ENCODE measurements at regions of chr19 and their contacts with region 1.

Region 1: DNA sequence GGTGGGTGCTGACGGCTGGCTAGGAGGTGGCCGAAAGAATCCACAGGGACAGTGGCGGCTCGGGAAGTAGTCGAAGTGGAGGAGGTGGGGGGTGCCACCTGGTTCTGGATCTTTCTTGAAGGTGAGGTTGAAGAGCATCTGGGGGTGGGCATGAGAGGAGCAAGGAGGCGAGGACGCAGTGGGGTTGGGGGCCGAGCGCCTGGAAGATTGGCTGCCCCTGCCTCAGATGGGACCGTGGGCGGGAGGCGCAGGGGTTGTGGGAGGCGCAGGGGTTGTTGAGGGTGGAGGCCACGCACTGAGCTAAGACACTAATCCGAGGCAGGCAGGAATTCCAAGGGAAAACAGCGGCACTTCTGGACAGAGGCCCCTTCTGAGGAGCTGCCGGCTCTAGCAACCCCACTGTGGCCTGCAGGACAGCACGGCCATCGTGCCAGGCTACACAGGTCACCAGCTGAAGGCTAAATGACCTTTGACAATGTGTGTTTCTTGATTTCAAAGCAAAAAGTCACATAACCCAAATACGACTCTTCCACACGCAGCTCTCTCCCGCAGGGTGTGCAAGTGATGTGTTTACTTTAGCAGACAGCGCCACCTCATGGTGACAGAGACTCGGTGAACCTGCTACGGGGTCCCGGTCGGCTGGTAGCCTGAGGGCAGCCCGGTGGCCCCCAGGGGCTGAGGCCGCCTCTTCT is 44.1 kb upstream of the RANBP3 start:
- DNase-seq: no peak
- H3K4me3 ChIP-seq: no peak overlapping the region
- CTCF ChIP-seq: peak; percentile 78

Region 2: DNA sequence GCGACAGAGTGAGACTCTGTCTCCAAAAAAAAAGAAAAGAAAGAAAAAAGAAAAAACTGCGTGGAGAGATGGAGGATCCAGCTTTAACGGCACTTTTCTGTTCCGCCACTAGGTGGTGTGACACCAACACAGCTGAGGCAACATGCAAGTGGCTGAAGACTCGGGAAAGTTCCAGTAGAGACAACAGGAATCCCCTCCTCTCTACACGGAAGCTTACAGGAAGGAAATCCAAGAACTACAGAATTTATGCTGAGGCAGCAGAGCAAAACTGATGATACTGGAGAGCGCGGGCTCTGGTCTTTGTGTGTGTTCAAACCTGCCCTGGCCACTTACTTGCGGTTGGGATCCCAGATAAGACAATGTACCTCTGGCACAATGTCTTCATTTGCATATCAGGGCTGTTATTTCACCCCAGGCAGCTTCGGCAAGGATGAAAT is 54.0 kb before region 1 on chr19:
- CTCF ChIA-PET with region 1: interaction called, 34 read pairs
- POLR2A ChIA-PET with region 1: no interaction called
- DNase-seq: no peak
- H3K4me3 ChIP-seq: no peak overlapping the region
- CTCF ChIP-seq: peak; percentile 85

Region 3: GRCh38 chr19:5977785-5978605 is 44.0 kb before region 1 on chr19 and contains the start of gene RANBP3:
- CTCF ChIA-PET with region 1: interaction called, 122 read pairs
- POLR2A ChIA-PET with region 1: no interaction called
- DNase-seq: peak; percentile 91
- H3K4me3 ChIP-seq: peak within 1 kb of the TSS; percentile 93
- CTCF ChIP-seq: no peak

Region 4: DNA sequence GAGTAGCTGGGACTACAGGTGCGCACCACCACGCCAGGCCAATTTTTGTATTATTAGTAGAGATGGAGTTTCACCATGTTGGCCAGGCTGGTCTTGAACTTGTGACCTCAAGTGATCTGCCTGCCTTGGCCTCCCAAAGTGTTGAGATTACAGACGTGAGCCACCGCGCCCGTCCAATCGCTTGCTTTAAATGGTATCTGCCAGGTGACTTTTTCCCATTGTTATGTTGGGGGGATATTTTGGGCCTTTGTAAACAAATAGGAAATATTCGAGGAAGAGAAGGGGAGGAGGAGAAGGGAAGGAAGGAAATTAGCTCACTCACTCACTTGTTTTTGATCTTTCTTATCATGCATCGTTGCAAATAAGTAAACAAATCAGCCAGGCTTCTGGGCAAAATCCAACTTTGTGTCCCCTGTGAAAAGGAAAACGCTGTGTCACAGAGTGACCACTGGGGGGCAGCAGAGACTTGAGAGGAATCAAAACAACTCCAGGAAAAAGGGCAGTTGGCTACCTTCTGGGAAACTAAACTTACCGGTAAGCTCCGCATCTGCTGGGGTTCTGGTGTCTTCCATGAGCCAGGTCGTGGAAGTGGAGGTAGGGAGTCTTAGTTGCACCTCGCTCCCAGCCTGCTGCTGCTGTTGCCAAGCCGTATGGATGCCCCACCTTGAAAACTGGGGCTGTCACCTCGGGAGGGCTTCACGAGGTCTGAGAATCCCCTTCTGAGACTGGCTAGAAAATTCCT is 34.8 kb before region 1 on chr19:
- CTCF ChIA-PET with region 1: interaction called, 122 read pairs
- POLR2A ChIA-PET with region 1: no interaction called
- DNase-seq: peak; percentile 34
- H3K4me3 ChIP-seq: peak overlapping the region; percentile 42
- CTCF ChIP-seq: peak; percentile 72

Region 5: DNA sequence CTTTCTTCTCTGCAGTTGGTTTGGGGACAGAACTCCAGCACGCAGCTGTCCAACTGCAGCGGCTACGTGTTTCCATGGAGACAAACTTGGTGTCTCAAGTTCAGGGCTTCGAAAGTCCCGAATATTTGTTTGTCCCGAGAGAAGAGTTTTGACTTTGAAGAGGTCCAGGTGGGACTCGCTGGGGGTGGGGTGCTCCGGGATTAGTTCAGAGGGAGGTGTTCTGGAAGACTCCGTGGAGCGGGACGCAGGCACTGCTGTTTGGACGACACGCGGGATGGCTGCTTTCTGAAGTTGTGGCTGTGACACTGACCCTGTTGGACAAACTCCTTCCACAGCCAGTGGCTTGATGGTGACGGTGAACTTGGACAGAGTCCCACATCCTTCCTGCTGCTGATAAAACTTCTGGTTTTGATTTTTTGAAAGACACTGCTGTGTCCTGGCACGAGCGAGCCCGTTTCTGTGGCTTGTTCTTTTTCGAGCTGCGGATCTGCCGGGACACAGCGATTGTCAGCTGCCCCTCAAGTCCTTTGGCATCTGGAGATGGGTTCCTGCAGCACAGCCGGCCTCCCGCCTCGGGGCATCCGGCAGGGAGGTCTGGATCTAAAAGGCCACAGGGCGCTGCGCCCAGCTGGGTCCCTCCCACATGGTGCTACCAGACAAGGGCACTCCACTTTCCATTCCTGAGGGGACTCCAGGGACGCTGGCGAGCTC is 28.2 kb before region 1 on chr19:
- CTCF ChIA-PET with region 1: interaction called, 122 read pairs
- POLR2A ChIA-PET with region 1: no interaction called
- DNase-seq: no peak
- H3K4me3 ChIP-seq: no peak overlapping the region
- CTCF ChIP-seq: no peak

Region 6: DNA sequence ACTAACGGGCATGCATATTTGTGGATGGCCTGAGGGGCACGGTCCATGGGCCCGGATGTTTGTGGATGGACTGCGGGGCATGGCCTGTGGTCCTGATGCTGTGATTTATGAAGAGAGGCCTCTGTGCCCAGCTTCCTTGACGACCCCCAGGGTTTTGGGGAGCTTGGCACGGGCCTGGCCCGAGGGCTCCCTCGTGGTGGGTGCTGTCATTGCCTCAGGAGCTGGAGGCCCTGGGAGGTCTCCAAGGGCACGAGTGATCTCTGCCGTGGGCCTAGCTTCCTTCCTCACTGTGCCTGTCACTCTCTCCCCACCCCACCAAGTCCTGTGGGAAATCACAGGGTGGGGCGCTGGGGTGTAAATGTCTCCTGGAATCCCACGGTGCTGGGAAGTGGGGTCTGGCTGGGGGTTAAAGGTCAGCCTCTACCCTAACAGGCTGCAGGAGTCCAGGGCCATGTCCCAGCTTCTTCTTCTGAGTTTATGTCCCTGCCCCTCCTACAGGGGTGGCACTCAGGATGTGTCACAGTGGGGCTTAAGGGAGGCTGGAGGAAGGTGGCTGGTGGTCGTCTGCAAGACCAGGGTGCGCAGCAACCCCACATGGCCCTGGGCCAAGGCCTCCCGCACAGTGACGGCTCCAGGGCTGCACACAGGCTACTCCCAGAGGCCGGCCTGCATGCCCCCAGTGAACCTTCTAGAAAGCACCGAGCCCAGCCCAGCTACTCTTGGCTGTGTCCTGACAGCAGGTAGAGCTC is 16.5 kb before region 1 on chr19:
- CTCF ChIA-PET with region 1: interaction called, 11 read pairs
- POLR2A ChIA-PET with region 1: interaction called, 3 read pairs
- DNase-seq: no peak
- H3K4me3 ChIP-seq: no peak overlapping the region
- CTCF ChIP-seq: no peak